ENCODE measurements at regions of chr11 and their contacts with region 1.

Region 1: DNA sequence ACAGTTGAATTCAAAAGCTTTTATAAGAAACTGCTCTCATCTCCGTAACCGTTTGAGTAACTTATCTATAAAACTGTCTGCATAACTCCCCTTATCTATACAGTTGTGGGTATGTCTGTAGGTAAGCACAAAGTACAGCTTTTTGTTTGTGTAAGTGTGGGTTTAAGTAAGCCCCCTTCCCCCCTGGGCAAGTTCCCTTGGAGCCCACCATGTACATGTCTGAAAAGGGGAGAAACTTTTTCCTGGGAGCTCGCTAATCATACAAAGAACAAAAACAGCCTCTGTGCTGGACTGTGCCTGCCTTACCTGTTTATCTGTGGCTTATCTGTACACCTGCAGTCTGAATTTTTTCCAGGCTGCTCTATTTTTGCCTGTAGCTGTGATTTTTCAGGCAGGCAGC is 36.3 kb upstream of the TMEM45B start:
- DNase-seq: no peak
- H3K4me3 ChIP-seq: no peak overlapping the region
- H3K27ac ChIP-seq: no peak overlapping the region
- H3K4me1 ChIP-seq: no peaks in the 10 kb centered on the region
- H3K27me3 ChIP-seq: no peaks in the 10 kb centered on the region
- CTCF ChIP-seq: no peak
- EP300 ChIP-seq: no peak
- POLR2A ChIP-seq: no peak
- RAD21 ChIP-seq: no peak

Region 2: GRCh38 chr11:129766898-129767604 is 12.3 kb before region 1 on chr11:
- CTCF ChIA-PET with region 1: interaction called, 13 read pairs
- POLR2A ChIA-PET with region 1: no interaction called
- DNase-seq: peak; percentile 38 to 67
- H3K4me3 ChIP-seq: no peak overlapping the region
- H3K27ac ChIP-seq: no peak overlapping the region
- H3K4me1 ChIP-seq: peaks cover 0 to 4% (median 0%) of the 10 kb centered on the region in 4 experiments; a peak in 2 of 7 replicates
- H3K27me3 ChIP-seq: no peaks in the 10 kb centered on the region
- CTCF ChIP-seq: peak; percentile 68 to 78 (median 68)
- EP300 ChIP-seq: no peak
- POLR2A ChIP-seq: no peak
- RAD21 ChIP-seq: peak; percentile 68 to 75